ENCODE measurements at regions of chr18 and their contacts with region 1.

Region 1: DNA sequence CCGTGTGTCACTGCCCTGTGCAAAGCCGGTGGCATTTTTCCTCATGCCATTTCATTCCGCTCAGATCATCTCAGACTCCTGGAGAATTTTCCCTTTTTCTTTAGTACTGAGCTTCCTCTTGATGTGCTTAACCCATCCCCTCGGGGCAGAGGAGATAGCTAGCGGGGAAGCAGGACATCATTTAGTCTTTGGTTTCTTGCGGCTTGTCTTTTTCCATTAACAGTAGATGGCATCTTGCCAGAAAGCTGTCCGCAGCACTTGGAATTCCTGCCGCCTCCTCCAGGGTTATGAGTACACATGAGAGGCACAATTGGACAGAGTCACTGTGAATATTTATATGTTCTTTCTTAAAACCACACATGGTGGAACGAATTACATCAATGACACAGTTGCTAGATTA is 226.6 kb downstream of the ALPK2 start:
- DNase-seq: no peak
- H3K4me3 ChIP-seq: no peak overlapping the region
- H3K27ac ChIP-seq: no peak overlapping the region
- H3K4me1 ChIP-seq: peaks cover 0 to 12% (median 0%) of the 10 kb centered on the region in 3 donors
- H3K27me3 ChIP-seq: no peaks in the 10 kb centered on the region
- CTCF ChIP-seq: peak in 1 of 6 experiments; percentile 6
- POLR2A ChIP-seq: no peak

Region 2: DNA sequence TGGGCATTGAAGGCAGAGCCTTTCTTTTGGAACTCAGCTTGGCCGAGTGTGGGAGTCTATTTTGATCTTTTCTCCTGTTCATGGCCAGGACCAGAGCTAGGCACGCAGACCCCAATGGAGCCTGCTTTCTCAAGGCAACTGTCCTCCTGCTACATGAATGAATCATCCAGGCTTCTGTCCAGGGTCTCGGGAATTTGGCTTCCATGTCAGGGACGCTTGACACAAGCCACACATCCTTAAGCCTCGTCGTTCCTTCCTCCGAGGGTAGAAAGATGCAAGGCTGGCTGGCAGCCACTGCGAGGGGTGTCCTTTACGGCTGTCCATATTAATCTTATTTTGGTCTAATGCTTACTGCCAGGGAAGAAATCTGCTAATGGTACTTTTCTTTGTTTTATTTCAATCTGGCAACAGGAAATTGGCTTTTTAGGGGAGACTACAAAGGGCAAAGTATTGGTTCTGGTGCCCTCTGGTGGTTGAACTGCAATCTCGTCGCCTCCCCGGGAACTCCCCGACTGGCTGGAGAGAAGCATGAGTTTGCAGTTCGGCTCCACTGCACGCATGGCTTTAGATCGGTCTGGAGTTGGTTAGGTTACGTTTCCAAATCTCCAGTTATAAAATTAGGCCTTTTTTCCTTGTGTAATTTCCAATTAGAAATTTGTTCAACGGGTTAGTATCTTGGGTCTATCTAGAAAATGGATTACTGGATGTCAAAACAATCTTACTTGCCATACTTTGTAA is 91.4 kb after region 1 on chr18:
- intact Hi-C with region 1: loop called (anchors 10 kb)
- DNase-seq: peak; percentile 9
- H3K4me3 ChIP-seq: peak overlapping the region in 3 of 4 donors; percentile 9 to 46 (median 10)
- H3K27ac ChIP-seq: no peak overlapping the region
- H3K4me1 ChIP-seq: peaks cover 0 to 17% (median 0%) of the 10 kb centered on the region in 3 donors
- H3K27me3 ChIP-seq: peaks cover 0 to 36% (median 0%) of the 10 kb centered on the region in 4 donors
- CTCF ChIP-seq: peak; percentile 63 to 89 (median 88)
- POLR2A ChIP-seq: no peak

Region 3: DNA sequence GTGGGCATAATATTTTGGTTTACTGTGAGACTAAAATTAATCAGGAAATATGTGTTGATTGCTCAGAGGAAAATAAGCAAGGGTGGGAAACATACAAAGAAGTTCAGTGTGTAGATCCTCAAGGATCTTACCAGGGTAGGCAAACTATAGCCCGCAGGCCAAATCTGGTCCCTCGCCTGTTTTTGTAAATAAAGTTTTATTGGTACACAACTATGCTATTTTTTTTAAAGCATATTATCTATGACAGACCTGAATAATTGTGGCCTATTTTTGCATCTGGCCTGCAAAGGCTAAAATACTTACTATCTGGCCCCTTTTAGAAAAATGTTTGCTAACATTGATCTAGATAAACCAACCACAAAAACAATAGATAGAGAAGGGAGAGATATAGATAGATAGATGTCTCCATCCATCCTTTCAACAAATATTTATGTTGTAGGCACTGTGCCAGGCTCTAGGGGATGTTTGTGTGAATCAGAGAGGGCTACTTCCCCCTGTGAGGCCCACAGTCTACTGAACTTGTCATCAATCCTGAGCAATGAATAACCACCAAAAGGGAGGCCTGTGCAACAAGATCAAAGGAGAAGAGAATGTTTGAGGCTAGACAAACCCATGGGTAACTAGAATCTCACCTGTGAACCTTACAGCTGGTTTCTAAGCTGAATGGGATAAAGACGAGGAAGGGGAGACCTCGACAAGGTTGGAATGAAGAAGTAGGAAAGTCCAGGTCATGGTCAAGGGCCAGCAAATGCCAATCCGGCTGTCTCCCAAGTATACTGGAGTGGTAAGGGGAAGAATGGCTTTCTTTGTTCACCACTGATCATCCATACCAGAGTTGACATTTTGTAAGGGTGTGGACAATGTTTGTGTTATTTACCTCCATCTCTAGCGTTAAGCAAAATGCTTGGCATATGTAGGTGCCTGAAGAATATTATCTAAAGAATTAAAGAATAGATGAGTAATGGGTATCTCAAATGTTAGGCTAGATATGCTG is 203.1 kb after region 1 on chr18:
- intact Hi-C with region 1: no loop called
- DNase-seq: no peak
- H3K4me3 ChIP-seq: no peak overlapping the region
- H3K27ac ChIP-seq: no peak overlapping the region
- H3K4me1 ChIP-seq: peaks cover 0 to 17% (median 6%) of the 10 kb centered on the region in 3 donors
- H3K27me3 ChIP-seq: no peaks in the 10 kb centered on the region
- CTCF ChIP-seq: no peak
- POLR2A ChIP-seq: no peak

Measured in esophagus squamous epithelium (tissue), 5 donors.